ENCODE measurements at regions of chr5 and their contacts with region 1.

Region 1: GRCh38 chr5:56506211-56506965 is 273.3 kb upstream of the ANKRD55 start:
- DNase-seq: peak; percentile 78 to 89
- H3K4me3 ChIP-seq: no peak overlapping the region
- H3K4me3 Mint-ChIP-seq: peak overlapping the region; percentile 4
- H3K27ac Mint-ChIP-seq: peak overlapping the region; percentile 35
- H3K4me1 ChIP-seq: peaks cover 69% of the 10 kb centered on the region
- H3K4me1 Mint-ChIP-seq: peaks cover 53% of the 10 kb centered on the region
- H3K27me3 ChIP-seq: no peaks in the 10 kb centered on the region
- H3K27me3 Mint-ChIP-seq: no peaks in the 10 kb centered on the region
- CTCF ChIP-seq: no peak

Region 2: DNA sequence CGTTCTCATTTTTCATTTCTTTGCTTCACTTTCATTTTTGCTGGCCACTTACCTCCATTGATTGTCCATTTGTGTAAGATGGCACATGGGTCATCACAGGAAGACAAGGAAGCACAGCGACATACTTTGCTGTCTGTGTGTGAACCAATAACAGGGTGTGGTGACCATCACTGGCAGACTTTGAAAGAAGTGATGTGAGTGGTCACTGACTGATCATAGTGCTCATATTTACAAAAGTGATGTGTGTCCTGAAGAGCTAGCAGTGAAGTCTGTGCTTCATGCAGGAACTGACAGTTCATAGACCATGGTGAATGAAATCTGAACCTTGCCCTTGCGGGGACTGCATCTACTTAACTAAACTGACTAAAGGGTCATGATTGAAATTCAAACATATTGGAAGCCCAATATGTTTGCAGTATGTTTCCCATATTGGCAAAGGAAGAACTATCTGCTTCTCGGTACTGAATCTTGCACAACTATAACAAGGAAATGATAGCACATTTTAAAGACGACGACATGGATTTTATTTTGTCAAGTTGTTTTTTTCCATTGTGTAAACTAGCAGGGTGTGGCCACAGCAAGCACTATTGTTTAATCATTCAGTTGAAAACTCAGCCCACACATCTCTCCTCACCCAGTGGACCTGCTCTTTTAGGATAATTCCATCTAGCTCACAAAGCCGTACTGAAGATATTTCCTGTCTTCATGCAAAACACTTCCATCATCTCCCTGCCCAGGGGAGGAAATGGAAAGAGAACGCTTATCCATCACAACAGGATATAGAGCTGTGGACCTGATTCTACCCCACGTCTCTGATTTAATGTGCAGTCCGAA is 41.2 kb before region 1 on chr5:
- CTCF ChIA-PET with region 1: no interaction called
- POLR2A ChIA-PET with region 1: no interaction called
- intact Hi-C with region 1: no loop called
- DNase-seq: no peak
- H3K4me3 ChIP-seq: no peak overlapping the region
- H3K4me3 Mint-ChIP-seq: no peak overlapping the region
- H3K27ac Mint-ChIP-seq: peak overlapping the region; percentile 0
- H3K4me1 ChIP-seq: peaks cover 57% of the 10 kb centered on the region
- H3K4me1 Mint-ChIP-seq: peaks cover 46% of the 10 kb centered on the region
- H3K27me3 ChIP-seq: no peaks in the 10 kb centered on the region; the same call in 1 of the 2 replicates
- H3K27me3 Mint-ChIP-seq: no peaks in the 10 kb centered on the region
- CTCF ChIP-seq: no peak

Region 3: GRCh38 chr5:56529666-56530430 is 23.5 kb after region 1 on chr5:
- CTCF ChIA-PET with region 1: interaction called, 3 read pairs
- POLR2A ChIA-PET with region 1: no interaction called
- intact Hi-C with region 1: loop called (anchors 1 kb)
- DNase-seq: no peak
- H3K4me3 ChIP-seq: no peak overlapping the region
- H3K4me3 Mint-ChIP-seq: no peak overlapping the region
- H3K27ac Mint-ChIP-seq: no peak overlapping the region
- H3K4me1 ChIP-seq: peaks cover 81% of the 10 kb centered on the region
- H3K4me1 Mint-ChIP-seq: peaks cover 38% of the 10 kb centered on the region
- H3K27me3 ChIP-seq: no peaks in the 10 kb centered on the region
- H3K27me3 Mint-ChIP-seq: no peaks in the 10 kb centered on the region
- CTCF ChIP-seq: no peak

Region 4: GRCh38 chr5:56552612-56553268 is 46.4 kb after region 1 on chr5:
- CTCF ChIA-PET with region 1: no interaction called
- POLR2A ChIA-PET with region 1: no interaction called
- intact Hi-C with region 1: no loop called
- DNase-seq: no peak
- H3K4me3 ChIP-seq: no peak overlapping the region
- H3K4me3 Mint-ChIP-seq: no peak overlapping the region
- H3K27ac Mint-ChIP-seq: no peak overlapping the region
- H3K4me1 ChIP-seq: no peaks in the 10 kb centered on the region
- H3K4me1 Mint-ChIP-seq: no peaks in the 10 kb centered on the region
- H3K27me3 ChIP-seq: no peaks in the 10 kb centered on the region
- H3K27me3 Mint-ChIP-seq: no peaks in the 10 kb centered on the region
- CTCF ChIP-seq: no peak

Region 5: GRCh38 chr5:56962286-56962685 is 455.9 kb after region 1 on chr5:
- CTCF ChIA-PET with region 1: no interaction called
- POLR2A ChIA-PET with region 1: no interaction called
- intact Hi-C with region 1: no loop called
- DNase-seq: peak; percentile 59 to 64
- H3K4me3 ChIP-seq: no peak overlapping the region
- H3K4me3 Mint-ChIP-seq: no peak overlapping the region
- H3K27ac Mint-ChIP-seq: peak overlapping the region; percentile 6
- H3K4me1 ChIP-seq: peaks cover 29% of the 10 kb centered on the region
- H3K4me1 Mint-ChIP-seq: peaks cover 46% of the 10 kb centered on the region
- H3K27me3 ChIP-seq: no peaks in the 10 kb centered on the region
- H3K27me3 Mint-ChIP-seq: no peaks in the 10 kb centered on the region
- CTCF ChIP-seq: no peak